Activated CD4-positive, alpha-beta T cell treated with anti-CD3 and anti-CD28 coated beads for 36 hours (primary cell): ENCODE measurements at regions of chr2 and their contacts with region 1.

Region 1: DNA sequence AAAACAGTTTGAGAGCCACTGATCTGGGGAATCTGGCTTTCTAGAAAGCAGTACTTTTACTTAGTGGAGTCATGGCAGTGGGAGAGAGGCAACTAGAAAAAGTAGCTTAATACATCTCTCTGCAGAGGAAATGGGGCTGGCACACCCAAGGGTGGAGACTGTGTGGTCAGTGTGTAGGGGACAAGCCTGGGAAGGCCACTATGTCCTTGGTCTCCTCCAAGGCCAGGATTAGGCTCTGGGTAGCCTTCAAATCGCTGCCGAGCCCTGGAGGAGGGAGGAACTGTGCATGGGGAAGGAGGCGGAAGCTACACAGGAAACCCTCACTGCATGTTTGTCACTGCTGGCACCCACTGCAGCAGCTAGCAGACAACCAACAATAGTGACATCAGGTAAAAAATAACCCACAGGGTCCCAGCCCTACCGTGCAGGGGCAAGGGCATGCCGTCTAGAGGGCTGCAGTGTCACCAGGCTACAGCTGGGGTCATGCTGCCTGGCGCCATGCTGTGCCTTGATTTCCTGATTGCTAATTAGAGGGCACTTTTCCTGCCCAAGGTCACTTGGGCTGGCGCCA is 34.8 kb downstream of the LBH start:
- DNase-seq: peak; percentile 69
- ATAC-seq: peak; percentile 45
- H3K4me3 Mint-ChIP-seq: peak overlapping the region; percentile 75
- H3K27ac Mint-ChIP-seq: peak overlapping the region; percentile 98
- H3K4me1 Mint-ChIP-seq: peaks cover 83% of the 10 kb centered on the region
- H3K27me3 Mint-ChIP-seq: no peaks in the 10 kb centered on the region

Region 2: GRCh38 chr2:30231212-30231995 is 34.7 kb before region 1 on chr2 and contains the start of gene LBH:
- CTCF ChIA-PET with region 1: interaction called, 36 read pairs
- POLR2A ChIA-PET with region 1: interaction called, 21 read pairs
- intact Hi-C with region 1: loop called (anchors 1 to 2 kb)
- DNase-seq: peak; percentile 94
- ATAC-seq: peak; percentile 41
- H3K4me3 Mint-ChIP-seq: peak within 1 kb of the TSS; percentile 76
- H3K27ac Mint-ChIP-seq: peak within 1 kb of the TSS; percentile 93
- H3K4me1 Mint-ChIP-seq: peaks cover 65% of the 10 kb centered on the region
- H3K27me3 Mint-ChIP-seq: peaks cover 10% of the 10 kb centered on the region
- total RNA-seq, gene LBH: 89.6 to 108 TPM

Region 3: DNA sequence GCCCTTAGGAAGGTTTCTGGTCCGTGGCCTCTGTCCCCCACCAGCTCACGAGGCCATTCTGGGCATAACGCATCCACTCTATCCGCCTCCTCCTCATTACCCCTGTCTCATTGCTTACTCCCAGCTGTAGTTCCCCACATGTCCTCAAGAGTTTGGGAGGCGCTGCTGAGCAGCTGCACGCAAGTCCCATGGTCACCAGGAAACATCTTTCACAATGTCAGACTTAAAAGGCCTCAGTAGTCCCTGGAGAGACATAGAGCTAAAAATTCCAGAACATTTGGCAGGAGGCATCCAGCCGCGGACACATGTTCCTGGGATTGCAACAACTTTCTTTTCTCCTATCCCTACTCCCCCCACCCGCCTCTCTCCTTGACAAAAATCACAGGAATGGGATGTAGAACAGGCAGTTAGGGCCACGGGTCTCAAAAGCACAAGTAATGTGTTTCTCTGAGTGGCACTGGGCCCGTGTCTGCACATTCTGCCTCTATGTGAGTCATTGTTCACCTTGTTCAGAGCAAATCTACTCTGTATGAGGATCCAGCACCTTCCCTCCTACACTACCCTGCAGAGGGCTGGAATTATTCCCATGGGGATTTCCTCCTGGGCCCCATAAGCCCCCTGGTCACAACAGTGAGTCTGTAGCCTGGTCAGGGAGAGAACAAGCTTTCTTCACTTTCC is 26.7 kb before region 1 on chr2:
- CTCF ChIA-PET with region 1: interaction called, 36 read pairs
- POLR2A ChIA-PET with region 1: interaction called, 12 read pairs
- intact Hi-C with region 1: loop called (anchors 1 to 2 kb)
- DNase-seq: peak; percentile 85
- ATAC-seq: peak; percentile 34
- H3K4me3 Mint-ChIP-seq: peak overlapping the region; percentile 76
- H3K27ac Mint-ChIP-seq: peak overlapping the region; percentile 93
- H3K4me1 Mint-ChIP-seq: peaks cover 93% of the 10 kb centered on the region
- H3K27me3 Mint-ChIP-seq: no peaks in the 10 kb centered on the region

Region 4: DNA sequence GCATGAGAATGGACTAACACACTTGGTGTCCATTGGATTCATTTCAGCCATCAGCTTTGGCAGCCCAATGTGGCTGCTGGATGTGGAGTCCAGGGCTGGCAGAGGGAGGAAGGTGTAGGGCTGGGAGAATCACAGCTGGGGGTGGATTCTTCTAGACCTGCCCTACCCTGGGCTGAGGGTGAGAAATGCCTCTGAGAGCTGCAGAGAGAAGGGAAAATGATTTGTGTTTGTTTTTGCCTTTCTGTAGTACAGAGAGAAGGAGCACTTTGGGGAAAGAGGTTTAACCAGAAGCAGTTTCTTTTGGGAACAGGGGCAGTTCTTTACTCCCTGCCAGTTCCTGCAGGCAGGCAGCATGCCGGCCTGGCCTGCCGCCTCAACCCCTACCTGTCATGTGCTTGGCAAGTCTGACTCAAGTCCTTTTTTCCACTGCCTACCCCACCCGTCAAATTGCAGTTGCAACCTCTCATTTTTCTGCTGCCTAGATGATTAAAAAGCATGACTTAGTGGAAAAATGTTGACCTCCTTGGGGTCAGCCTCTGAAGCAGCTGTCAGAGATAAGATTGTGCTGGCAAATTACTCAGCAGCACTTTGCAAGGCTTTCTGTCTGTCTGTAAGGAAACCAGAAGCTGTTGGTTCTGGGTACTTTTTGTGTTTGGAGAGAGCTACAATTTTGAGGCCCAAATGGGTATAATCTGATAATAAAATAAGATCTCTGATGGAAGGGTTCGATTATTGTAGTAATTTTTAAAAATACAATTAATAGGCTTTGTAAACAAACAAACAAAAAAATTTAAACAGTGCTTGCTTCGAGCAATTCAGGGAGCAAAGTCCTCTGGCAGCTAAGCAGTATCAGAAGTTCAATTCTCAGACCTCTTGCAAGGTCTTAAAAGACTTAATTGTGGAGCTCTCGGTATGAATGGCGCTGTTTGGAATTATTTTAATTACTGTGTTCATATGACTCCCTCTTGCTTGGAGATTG is 13.1 kb before region 1 on chr2:
- CTCF ChIA-PET with region 1: interaction called, 9 read pairs
- POLR2A ChIA-PET with region 1: interaction called, 4 read pairs
- intact Hi-C with region 1: loop called in 1 of 2 experiments (anchors 1 kb)
- DNase-seq: peak; percentile 87
- ATAC-seq: peak; percentile 77
- H3K4me3 Mint-ChIP-seq: peak overlapping the region; percentile 42
- H3K27ac Mint-ChIP-seq: peak overlapping the region; percentile 88
- H3K4me1 Mint-ChIP-seq: peaks cover 96% of the 10 kb centered on the region
- H3K27me3 Mint-ChIP-seq: no peaks in the 10 kb centered on the region

Region 5: DNA sequence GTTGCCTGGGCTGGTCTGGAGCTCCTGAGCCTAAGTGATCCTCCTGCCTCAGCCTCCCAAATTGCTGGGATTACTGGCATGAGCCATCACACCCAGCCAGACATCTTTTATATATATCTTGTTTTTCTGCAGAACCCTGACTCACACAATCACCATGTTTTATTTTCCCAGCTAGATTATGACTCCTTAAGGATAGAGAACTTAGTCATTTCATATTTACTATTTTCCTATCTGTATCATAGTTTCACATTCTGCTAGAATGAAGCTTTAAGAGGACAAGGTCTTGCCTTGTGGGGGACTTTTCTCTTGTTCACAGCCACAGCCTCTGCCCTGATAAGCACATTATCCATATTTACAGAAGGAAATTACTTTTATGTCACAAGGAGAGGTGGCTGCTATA is 39.1 kb after region 1 on chr2:
- CTCF ChIA-PET with region 1: interaction called, 5 read pairs
- POLR2A ChIA-PET with region 1: interaction called, 3 read pairs
- intact Hi-C with region 1: loop called in 1 of 2 experiments (anchors 5 kb)
- DNase-seq: no peak
- ATAC-seq: peak; percentile 73
- H3K4me3 Mint-ChIP-seq: no peak overlapping the region
- H3K27ac Mint-ChIP-seq: no peak overlapping the region
- H3K4me1 Mint-ChIP-seq: peaks cover 30% of the 10 kb centered on the region
- H3K27me3 Mint-ChIP-seq: no peaks in the 10 kb centered on the region

Region 6: DNA sequence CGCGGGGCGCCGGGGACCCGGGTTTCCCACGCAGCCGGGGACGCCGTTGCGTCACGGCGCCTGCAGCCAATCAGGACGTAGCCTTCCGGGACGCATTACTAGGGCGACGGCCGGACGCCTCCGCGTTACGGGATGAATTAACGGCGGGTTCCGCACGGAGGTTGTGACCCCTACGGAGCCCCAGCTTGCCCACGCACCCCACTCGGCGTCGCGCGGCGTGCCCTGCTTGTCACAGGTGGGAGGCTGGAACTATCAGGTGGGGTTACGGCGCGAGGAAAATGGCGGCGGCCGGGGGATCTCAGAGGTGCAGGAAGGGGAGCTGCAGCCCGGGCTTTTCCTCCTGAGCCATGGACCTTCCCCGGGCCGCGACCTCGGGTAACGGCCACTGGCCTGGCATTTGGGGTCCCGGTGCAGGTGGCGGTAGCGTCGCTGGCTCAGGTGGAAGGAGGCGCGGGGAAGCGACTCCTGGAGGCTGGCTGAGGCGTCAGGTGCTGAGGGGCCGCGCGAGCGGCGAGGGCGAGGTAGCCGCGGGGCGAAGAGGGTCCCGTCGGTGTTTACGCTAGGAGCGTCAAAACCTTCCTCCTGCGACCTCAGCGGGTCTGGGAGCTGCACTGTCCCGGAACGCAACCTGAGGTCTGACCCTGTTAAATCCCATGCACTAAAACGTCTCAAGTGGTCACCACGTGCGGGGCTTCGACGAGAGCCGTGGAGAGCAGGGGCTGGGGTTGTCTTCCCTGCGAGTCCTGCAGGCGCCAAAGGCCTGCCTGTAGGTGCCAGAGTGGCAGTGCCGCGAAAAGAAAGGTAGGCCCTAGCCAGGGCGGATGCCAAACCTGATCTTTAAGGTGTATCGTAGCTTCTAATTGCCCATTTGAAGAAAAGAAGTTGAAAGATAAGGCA is 181.3 kb after region 1 on chr2 and contains the start of gene LCLAT1:
- CTCF ChIA-PET with region 1: interaction called, 4 read pairs
- POLR2A ChIA-PET with region 1: interaction called, 3 read pairs
- intact Hi-C with region 1: loop called in 1 of 2 experiments (anchors 5 kb)
- DNase-seq: peak; percentile 91
- ATAC-seq: peak; percentile 80
- H3K4me3 Mint-ChIP-seq: peak within 1 kb of the TSS; percentile 87
- H3K27ac Mint-ChIP-seq: peak within 1 kb of the TSS; percentile 96
- H3K4me1 Mint-ChIP-seq: peaks cover 32% of the 10 kb centered on the region
- H3K27me3 Mint-ChIP-seq: no peaks in the 10 kb centered on the region
- total RNA-seq, gene LCLAT1: 18.5 to 21.7 TPM

Region 7: DNA sequence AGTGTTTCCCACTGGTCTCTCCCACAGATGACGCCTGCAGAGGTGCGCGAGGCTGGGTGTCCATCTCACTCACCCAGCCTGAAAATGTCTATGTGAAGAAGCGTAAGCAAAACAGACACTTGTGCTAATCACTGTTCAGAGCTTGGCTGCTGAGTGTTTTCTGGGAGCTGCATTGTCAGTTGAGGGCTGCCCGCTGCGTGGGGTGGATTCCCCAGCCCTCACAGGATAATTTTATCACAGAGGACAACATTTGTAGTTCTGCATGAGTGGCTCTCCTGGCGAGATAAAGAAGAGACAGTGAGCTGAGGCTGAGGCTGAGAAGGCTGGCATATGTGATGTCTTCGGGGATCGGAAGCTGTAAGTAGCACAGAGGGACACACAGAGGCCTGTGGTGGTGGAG is 557.3 kb after region 1 on chr2:
- CTCF ChIA-PET with region 1: no interaction called
- POLR2A ChIA-PET with region 1: no interaction called
- intact Hi-C with region 1: no loop called
- DNase-seq: no peak
- ATAC-seq: no peak
- H3K4me3 Mint-ChIP-seq: no peak overlapping the region
- H3K27ac Mint-ChIP-seq: no peak overlapping the region
- H3K4me1 Mint-ChIP-seq: no peaks in the 10 kb centered on the region
- H3K27me3 Mint-ChIP-seq: peaks cover 1% of the 10 kb centered on the region